Activated CD4-positive, alpha-beta T cell treated with anti-CD3 and anti-CD28 coated beads for 36 hours (primary cell): ENCODE measurements at regions of chr20 and their contacts with region 1.

Region 1: GRCh38 chr20:14360416-14360815 is 23.0 kb upstream of the FLRT3 start:
- DNase-seq: no peak
- ATAC-seq: no peak
- H3K4me3 Mint-ChIP-seq: no peak overlapping the region
- H3K27ac Mint-ChIP-seq: no peak overlapping the region
- H3K4me1 Mint-ChIP-seq: no peaks in the 10 kb centered on the region
- H3K27me3 Mint-ChIP-seq: no peaks in the 10 kb centered on the region

Region 2: DNA sequence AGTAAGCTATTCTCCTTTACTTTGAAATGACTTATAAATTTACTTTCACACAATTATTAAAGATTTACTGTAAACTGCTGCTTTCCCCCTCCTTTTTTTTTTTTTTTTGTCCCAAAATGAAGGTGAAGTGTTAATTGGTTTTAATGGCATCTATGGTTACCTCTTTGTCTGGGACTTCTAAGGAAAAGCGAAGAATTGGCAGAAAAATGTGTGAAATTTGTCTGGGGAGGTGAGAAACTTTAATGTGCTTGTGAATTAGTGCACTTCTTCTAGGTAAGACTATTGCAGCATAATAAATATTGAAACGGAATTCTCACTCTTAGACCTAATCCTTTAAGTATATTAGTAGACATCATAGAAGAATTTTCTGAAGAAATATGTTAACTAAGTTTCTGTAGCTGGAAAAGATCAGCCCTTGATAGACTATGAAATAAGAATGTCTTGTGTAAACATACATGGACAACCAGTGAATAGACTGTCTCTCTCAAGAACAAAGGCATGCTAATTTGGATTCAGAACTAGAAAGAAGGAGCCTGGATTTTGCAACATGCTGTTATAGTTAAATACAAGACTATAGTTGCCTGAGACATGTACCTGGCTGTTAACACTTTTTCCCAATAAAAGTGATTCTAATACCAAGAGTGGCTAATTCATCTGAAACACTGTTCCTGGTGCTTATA is 46.9 kb before region 1 on chr20:
- CTCF ChIA-PET with region 1: no interaction called
- POLR2A ChIA-PET with region 1: no interaction called
- intact Hi-C with region 1: no loop called
- DNase-seq: no peak
- ATAC-seq: no peak
- H3K4me3 Mint-ChIP-seq: no peak overlapping the region
- H3K27ac Mint-ChIP-seq: no peak overlapping the region
- H3K4me1 Mint-ChIP-seq: no peaks in the 10 kb centered on the region
- H3K27me3 Mint-ChIP-seq: no peaks in the 10 kb centered on the region

Region 3: GRCh38 chr20:14415492-14415891 is 55.1 kb after region 1 on chr20:
- CTCF ChIA-PET with region 1: no interaction called
- POLR2A ChIA-PET with region 1: no interaction called
- intact Hi-C with region 1: loop called in 1 of 2 experiments (anchors 5 kb)
- DNase-seq: no peak
- ATAC-seq: no peak
- H3K4me3 Mint-ChIP-seq: no peak overlapping the region
- H3K27ac Mint-ChIP-seq: no peak overlapping the region
- H3K4me1 Mint-ChIP-seq: no peaks in the 10 kb centered on the region
- H3K27me3 Mint-ChIP-seq: no peaks in the 10 kb centered on the region